ENCODE measurements at regions of chr5 and their contacts with region 1.

Region 1: DNA sequence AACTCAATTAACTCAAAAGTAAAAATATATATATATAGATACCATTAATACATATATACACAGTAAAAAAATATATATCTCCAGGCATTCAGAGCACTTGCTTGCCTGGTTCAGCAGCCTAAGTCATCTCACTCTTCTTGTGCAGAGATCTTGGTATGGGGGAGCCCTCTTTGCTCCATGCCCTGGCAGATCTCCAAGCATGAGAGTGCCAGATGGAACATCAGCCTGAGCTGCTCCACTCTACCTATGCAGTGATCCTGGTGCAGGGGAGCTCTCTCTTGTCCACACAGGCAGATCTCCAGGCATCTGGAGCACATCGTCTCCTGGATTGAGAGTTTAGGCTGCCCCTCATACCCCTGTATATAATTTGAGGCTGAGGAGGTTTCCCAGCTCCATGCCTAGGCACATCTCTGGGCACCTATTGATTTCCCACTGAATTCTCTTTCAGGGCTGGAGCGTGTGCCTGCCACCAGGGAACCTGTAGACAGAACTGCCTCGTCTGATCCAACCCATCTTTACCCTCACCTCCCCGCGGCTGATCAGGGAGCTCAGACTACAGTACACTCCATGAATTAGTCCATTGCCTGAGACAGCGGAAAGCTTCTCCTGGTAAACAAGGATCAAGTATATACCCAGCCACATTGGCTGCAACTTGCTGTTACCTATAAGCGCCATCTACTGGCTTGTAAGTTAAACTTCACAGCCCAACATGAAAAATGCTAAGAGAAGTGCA is 342.4 kb upstream of the GRIA1 start:
- DNase-seq: peak; percentile 38 to 45
- H3K4me3 ChIP-seq: no peak overlapping the region
- H3K4me3 Mint-ChIP-seq: no peak overlapping the region
- H3K27ac Mint-ChIP-seq: no peak overlapping the region
- H3K4me1 ChIP-seq: no peaks in the 10 kb centered on the region
- H3K4me1 Mint-ChIP-seq: no peaks in the 10 kb centered on the region
- H3K27me3 ChIP-seq: no peaks in the 10 kb centered on the region
- H3K27me3 Mint-ChIP-seq: peaks cover 3% of the 10 kb centered on the region
- CTCF ChIP-seq: peak; percentile 48 to 59

Region 2: GRCh38 chr5:152560512-152561137 is 587.4 kb before region 1 on chr5:
- CTCF ChIA-PET with region 1: interaction called, 6 read pairs
- POLR2A ChIA-PET with region 1: no interaction called
- intact Hi-C with region 1: loop called (anchors 1 kb)
- DNase-seq: peak; percentile 60 to 62
- H3K4me3 ChIP-seq: no peak overlapping the region
- H3K4me3 Mint-ChIP-seq: no peak overlapping the region
- H3K27ac Mint-ChIP-seq: no peak overlapping the region
- H3K4me1 ChIP-seq: no peaks in the 10 kb centered on the region
- H3K4me1 Mint-ChIP-seq: no peaks in the 10 kb centered on the region
- H3K27me3 ChIP-seq: no peaks in the 10 kb centered on the region
- H3K27me3 Mint-ChIP-seq: no peaks in the 10 kb centered on the region
- CTCF ChIP-seq: peak; percentile 68 to 71

Region 3: GRCh38 chr5:152592397-152592796 is 555.7 kb before region 1 on chr5:
- CTCF ChIA-PET with region 1: no interaction called
- POLR2A ChIA-PET with region 1: no interaction called
- intact Hi-C with region 1: loop called (anchors 1 kb)
- DNase-seq: no peak
- H3K4me3 ChIP-seq: no peak overlapping the region
- H3K4me3 Mint-ChIP-seq: no peak overlapping the region
- H3K27ac Mint-ChIP-seq: no peak overlapping the region
- H3K4me1 ChIP-seq: no peaks in the 10 kb centered on the region
- H3K4me1 Mint-ChIP-seq: no peaks in the 10 kb centered on the region
- H3K27me3 ChIP-seq: no peaks in the 10 kb centered on the region
- H3K27me3 Mint-ChIP-seq: no peaks in the 10 kb centered on the region
- CTCF ChIP-seq: peak in 1 of 2 experiments; percentile 17

Region 4: DNA sequence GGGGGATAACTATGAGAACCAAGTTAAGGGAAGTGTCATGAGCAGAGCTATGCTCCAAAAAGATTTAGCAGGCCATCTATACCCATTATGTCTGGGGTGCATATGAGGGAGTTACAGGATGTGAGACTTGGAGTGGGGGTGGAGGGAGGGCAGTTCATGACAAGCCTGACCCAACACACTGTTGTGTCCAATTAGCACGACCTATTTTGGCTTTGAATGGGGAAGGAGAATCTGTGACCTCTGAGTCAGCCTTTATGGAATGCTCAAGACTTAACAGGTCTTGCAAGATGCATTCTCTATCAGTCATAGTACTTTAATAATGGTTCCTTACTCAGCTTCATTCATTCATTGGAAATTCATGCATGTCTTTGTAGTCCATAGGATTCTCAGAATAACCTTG is 414.1 kb after region 1 on chr5:
- CTCF ChIA-PET with region 1: no interaction called
- POLR2A ChIA-PET with region 1: no interaction called
- intact Hi-C with region 1: no loop called
- DNase-seq: no peak
- H3K4me3 ChIP-seq: no peak overlapping the region
- H3K4me3 Mint-ChIP-seq: no peak overlapping the region
- H3K27ac Mint-ChIP-seq: no peak overlapping the region
- H3K4me1 ChIP-seq: no peaks in the 10 kb centered on the region
- H3K4me1 Mint-ChIP-seq: no peaks in the 10 kb centered on the region
- H3K27me3 ChIP-seq: no peaks in the 10 kb centered on the region; the same call in 1 of the 2 replicates
- H3K27me3 Mint-ChIP-seq: no peaks in the 10 kb centered on the region
- CTCF ChIP-seq: no peak

Measured in Caco-2 (cell line).